ENCODE measurements at regions of chr11 and their contacts with region 1.

Region 1: DNA sequence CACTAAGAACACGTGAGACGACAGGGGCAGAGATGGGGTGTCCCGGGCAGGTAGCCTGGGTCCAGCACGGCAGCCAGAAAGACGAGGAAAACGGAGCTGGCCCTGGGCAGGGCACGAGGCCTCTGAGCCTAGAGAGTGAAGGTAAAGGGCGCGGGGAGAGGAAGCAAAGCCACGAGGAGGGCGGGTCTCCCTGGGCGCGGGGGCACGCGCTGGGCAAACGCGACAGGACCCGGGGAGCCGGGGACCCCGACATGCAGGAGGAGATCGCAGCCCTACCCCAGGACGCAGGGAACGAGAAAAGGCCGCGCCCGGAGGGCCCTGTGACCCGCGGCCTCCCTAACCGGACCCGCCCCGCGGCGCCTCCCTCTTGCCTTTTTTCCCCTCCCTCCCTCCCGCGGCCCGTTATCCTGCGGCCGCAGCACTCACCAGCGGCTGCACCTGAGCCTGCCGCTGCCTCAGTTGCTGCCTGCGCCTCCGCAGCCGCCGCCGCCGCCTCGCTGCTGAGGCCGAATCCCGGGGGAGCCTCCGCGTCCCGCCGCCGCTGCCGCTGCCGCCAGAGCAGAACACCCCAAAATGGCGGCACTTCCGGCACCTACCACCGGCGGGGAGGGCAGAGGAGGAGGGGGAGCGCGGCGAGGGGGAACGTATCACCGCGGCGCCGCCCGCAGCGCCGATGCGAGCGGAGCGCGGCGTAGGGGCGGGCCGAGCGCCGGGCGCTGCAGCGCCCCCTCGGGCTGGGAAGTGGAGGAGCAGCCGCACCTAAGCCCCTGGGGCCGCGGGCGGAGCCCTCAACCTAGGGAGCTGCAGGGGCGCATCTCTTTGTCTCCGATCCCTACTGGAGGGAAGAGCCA is at the start of gene CELF1:
- DNase-seq: peak; percentile 90 to 94 (median 92)
- H3K4me3 ChIP-seq: peak within 1 kb of the TSS; percentile 14 to 99 (median 49)
- H3K27ac ChIP-seq: peak within 1 kb of the TSS; percentile 37 to 94 (median 92)
- H3K4me1 ChIP-seq: peaks cover 23 to 41% of the 10 kb centered on the region in 2 donors
- H3K27me3 ChIP-seq: no peaks in the 10 kb centered on the region
- CTCF ChIP-seq: peak; percentile 28 to 95 (median 78)
- POLR2A ChIP-seq: peak in 1 of 2 donors; percentile 56
- total RNA-seq, gene CELF1: 77.3 to 128 (median 107) TPM

Region 2: DNA sequence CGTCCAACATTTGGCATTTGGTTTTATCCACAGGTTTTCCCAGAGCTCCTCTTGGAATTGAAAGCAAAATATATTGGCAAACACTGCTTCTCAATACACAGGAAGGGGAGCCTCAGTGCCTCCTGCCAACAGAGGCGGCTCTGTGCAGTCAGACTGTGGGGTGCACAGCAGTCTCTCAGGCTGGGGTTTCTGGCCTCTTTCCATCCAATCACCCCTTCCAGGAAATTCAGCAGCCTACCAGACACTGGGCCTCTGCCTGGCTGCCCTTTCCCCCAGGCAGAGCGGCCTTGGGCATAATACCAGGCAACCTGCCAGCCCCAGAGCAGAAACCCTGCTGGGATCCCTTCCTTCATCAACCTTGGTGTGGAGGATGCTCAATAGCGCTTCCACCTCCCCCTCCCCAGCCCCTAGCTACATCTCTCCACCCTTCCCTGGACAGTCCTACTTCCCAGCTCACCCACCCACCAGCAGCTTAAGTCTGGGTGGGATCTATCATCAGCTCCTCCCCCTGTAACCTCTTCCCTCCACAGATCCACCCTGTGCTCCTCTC is 86.0 kb before region 1 on chr11:
- intact Hi-C with region 1: loop called in 1 of 2 experiments (anchors 5 kb)
- DNase-seq: peak; percentile 71 to 89 (median 86)
- H3K4me3 ChIP-seq: no peak overlapping the region
- H3K27ac ChIP-seq: peak overlapping the region; percentile 32 to 87 (median 72)
- H3K4me1 ChIP-seq: peaks cover 17 to 28% of the 10 kb centered on the region in 2 donors
- H3K27me3 ChIP-seq: no peaks in the 10 kb centered on the region
- CTCF ChIP-seq: no peak
- POLR2A ChIP-seq: peak in 1 of 2 donors; percentile 16

Region 3: GRCh38 chr11:47477323-47477722 is 75.5 kb before region 1 on chr11:
- intact Hi-C with region 1: loop called in 1 of 2 experiments (anchors 5 kb)
- DNase-seq: peak in 6 of 7 donors; percentile 47 to 72 (median 64)
- H3K4me3 ChIP-seq: no peak overlapping the region
- H3K27ac ChIP-seq: peak overlapping the region in 2 of 5 donors; percentile 30 to 36
- H3K4me1 ChIP-seq: peaks cover 4 to 16% of the 10 kb centered on the region in 2 donors
- H3K27me3 ChIP-seq: no peaks in the 10 kb centered on the region
- CTCF ChIP-seq: no peak
- POLR2A ChIP-seq: no peak

Region 4: DNA sequence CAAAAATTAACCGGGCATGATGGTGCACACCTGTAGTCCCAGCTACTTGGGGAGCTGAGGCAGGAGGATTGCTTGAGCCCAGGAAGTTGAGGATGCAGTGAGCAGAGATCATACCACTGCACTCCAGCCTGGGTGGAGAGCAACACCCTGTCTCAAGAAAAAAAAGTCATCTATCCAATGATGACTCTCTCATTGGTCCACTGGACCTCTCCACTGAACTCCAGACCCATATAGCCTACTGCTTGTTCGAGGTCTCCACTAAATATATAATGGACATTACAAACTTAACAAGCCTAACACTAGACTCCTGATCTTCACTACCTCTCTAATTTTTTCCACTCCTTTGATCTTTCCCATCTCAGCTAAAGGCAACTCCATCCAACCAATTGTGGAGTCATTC is 123.1 kb after region 1 on chr11:
- intact Hi-C with region 1: no loop called
- DNase-seq: no peak
- H3K4me3 ChIP-seq: no peak overlapping the region
- H3K27ac ChIP-seq: no peak overlapping the region
- H3K4me1 ChIP-seq: no peaks in the 10 kb centered on the region
- H3K27me3 ChIP-seq: no peaks in the 10 kb centered on the region
- CTCF ChIP-seq: no peak
- POLR2A ChIP-seq: no peak